ENCODE measurements at regions of chr18 and their contacts with region 1.

Region 1: DNA sequence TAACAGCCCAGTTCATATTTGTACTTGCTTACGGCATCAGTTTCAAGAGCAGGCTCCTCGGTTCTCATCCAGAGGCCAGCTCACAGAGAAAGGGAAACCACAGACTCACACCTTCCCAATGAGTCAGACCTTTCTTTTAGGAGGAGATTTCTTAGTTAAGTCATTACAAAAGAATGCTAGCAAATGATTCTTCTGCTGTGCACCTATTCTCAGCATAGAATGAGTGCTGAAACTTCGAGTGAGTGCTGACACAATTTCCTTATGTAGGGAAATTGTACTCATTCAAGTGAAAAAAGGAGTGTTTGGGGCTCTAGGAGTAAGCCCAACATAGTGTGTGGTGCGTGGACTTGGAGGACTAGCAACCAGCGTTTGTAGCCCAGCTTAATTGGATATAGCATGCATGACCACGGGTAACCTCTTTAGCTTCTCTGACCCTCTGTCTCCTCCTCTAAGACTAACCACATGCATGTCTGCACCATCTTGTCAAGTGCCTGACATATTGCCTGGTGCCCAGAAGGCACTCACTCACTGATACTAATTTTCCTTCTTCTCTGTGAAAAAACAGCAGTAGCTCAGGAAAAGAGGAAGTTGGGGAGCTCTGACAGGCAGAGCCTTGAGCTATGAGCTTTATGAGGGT is 87.0 kb downstream of the ALPK2 start:
- DNase-seq: peak; percentile 80
- ATAC-seq: peak; percentile 87
- H3K4me3 Mint-ChIP-seq: peak overlapping the region; percentile 40
- H3K27ac Mint-ChIP-seq: peak overlapping the region; percentile 72
- H3K4me1 Mint-ChIP-seq: peaks cover 70% of the 10 kb centered on the region
- H3K27me3 Mint-ChIP-seq: peaks cover 5% of the 10 kb centered on the region
- CTCF ChIP-seq: no peak

Region 2: GRCh38 chr18:58529714-58530354 is 12.1 kb before region 1 on chr18:
- CTCF ChIA-PET with region 1: interaction called, 74 read pairs
- POLR2A ChIA-PET with region 1: interaction called, 4 read pairs
- intact Hi-C with region 1: no loop called
- DNase-seq: peak; percentile 84
- ATAC-seq: peak; percentile 79
- H3K4me3 Mint-ChIP-seq: no peak overlapping the region
- H3K27ac Mint-ChIP-seq: no peak overlapping the region
- H3K4me1 Mint-ChIP-seq: peaks cover 16% of the 10 kb centered on the region
- H3K27me3 Mint-ChIP-seq: peaks cover 16% of the 10 kb centered on the region
- CTCF ChIP-seq: peak; percentile 95

Region 3: DNA sequence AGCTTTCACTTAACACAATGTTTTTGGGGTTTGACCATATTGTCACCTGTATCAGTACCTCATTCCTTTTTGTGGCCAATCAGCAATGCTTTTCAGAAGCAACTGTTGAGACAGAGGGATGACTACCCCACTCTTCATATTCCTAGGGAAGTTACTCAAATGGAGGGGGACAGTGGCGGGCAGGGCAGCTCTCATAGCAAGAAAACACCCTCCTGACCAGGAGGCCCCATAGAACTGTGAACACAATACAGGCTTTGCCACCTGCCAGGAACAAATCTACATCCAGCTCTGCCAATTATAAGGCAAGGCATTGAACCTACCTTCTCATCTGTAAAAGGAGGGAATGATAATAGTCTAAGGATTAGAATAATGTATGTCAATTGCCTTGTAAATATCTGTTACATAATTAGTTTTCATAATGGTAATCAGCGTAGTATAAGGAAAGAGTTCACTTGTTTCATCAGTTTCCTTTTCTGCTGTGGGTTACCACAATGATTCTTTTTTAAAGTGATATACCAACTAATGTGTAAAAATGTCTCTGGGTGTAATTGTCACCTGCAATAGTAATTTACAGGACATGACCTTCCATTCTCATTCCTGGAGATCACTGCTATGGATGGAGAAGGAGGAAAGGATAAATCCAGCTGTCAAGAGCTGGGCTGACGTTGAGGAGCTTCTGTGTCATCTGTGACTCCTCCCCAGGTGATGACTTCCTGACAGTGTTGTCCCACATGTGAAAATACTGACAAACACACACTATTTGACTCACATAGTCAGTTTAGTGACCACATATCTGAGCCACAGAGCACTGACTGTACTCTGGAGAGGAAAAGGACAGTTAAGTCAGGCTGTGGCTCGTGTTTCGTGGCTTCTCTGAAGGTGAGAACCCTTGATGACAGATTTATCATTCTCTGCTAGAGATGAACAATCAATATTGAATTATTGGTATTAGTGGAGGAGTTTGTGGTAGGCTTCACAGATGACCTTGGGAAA is 73.5 kb after region 1 on chr18:
- CTCF ChIA-PET with region 1: interaction called, 3 read pairs
- POLR2A ChIA-PET with region 1: interaction called, 8 read pairs
- intact Hi-C with region 1: loop called (anchors 5 kb)
- DNase-seq: peak; percentile 89
- ATAC-seq: peak; percentile 97
- H3K4me3 Mint-ChIP-seq: peak overlapping the region; percentile 49
- H3K27ac Mint-ChIP-seq: peak overlapping the region; percentile 96
- H3K4me1 Mint-ChIP-seq: peaks cover 39% of the 10 kb centered on the region
- H3K27me3 Mint-ChIP-seq: no peaks in the 10 kb centered on the region
- CTCF ChIP-seq: no peak

Region 4: GRCh38 chr18:58699551-58699950 is 157.6 kb after region 1 on chr18:
- CTCF ChIA-PET with region 1: no interaction called
- POLR2A ChIA-PET with region 1: no interaction called
- intact Hi-C with region 1: loop called (anchors 2 kb)
- DNase-seq: no peak
- ATAC-seq: no peak
- H3K4me3 Mint-ChIP-seq: no peak overlapping the region
- H3K27ac Mint-ChIP-seq: no peak overlapping the region
- H3K4me1 Mint-ChIP-seq: peaks cover 49% of the 10 kb centered on the region
- H3K27me3 Mint-ChIP-seq: no peaks in the 10 kb centered on the region
- CTCF ChIP-seq: no peak

Region 5: DNA sequence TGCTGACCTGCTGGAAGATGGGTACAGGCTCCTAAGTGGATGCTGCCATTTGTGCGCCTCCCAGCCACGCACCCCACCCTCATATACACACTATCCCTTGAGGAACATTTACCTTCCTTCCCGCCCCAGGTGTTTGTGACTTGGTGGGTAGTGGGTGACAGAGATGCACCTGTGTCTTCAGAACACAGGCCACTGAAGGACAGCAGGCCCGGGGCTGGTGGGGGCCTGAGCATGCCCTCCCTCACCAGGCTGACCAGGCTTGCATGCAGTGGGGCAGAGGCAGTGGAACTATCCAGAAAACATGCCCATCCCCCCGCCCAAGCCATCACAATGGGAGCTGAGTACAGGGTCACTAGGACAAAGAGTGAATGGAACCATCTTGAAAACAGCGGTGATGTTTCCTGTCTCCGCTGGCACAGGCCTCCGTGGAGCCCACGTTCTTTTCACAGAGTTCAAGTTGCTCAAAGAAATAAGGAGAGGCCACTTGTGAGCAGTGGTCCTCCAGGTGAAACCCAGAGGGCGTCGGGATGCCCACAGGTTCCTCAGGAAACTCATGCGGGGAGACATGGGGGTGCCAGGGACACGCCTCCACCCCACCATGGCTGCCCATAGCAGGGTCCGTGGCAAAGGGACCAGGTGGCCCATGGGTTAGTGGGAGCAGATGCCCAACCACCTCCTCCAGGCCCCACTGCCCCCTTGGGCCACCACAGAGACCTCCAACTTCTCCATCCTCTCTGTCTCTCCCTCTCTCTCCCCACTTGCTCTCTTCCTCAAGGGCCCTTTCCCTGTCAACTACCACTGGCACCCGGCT is 220.3 kb after region 1 on chr18:
- CTCF ChIA-PET with region 1: interaction called, 88 read pairs
- POLR2A ChIA-PET with region 1: no interaction called
- intact Hi-C with region 1: no loop called
- DNase-seq: no peak
- ATAC-seq: no peak
- H3K4me3 Mint-ChIP-seq: no peak overlapping the region
- H3K27ac Mint-ChIP-seq: no peak overlapping the region
- H3K4me1 Mint-ChIP-seq: peaks cover 21% of the 10 kb centered on the region
- H3K27me3 Mint-ChIP-seq: peaks cover 26% of the 10 kb centered on the region
- CTCF ChIP-seq: no peak